Heart right ventricle (tissue), 16 donors: ENCODE measurements at regions of chr7 and their contacts with region 1.

Region 1: GRCh38 chr7:53811555-53812079 is 730.6 kb upstream of the VSTM2A start:
- DNase-seq: no peak
- ATAC-seq: no peak
- H3K4me3 ChIP-seq: no peak overlapping the region
- H3K27ac ChIP-seq: no peak overlapping the region
- H3K4me1 ChIP-seq: no peaks in the 10 kb centered on the region
- H3K27me3 ChIP-seq: no peaks in the 10 kb centered on the region
- CTCF ChIP-seq: no peak

Region 2: DNA sequence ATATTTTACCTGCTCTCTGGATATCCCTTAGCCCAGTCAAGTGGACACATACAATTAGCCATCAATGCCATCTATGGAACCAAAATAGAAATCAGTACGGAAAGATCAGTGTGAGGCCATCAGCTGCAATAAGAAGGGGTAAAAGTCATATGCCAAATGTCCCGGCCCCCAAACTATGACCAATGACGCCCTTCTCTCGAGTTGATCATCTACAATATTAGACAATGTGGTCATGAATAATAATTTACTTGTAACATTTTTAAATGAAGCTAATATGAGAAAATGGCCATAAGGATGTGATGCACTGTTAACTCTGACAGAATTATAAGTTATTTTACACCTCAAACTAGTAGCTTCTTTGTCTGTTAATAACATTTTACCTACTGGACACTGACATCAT is 187.2 kb before region 1 on chr7:
- intact Hi-C with region 1: no loop called
- DNase-seq: no peak
- ATAC-seq: no peak
- H3K4me3 ChIP-seq: no peak overlapping the region
- H3K27ac ChIP-seq: no peak overlapping the region
- H3K4me1 ChIP-seq: no peaks in the 10 kb centered on the region
- H3K27me3 ChIP-seq: no peaks in the 10 kb centered on the region
- CTCF ChIP-seq: no peak

Region 3: DNA sequence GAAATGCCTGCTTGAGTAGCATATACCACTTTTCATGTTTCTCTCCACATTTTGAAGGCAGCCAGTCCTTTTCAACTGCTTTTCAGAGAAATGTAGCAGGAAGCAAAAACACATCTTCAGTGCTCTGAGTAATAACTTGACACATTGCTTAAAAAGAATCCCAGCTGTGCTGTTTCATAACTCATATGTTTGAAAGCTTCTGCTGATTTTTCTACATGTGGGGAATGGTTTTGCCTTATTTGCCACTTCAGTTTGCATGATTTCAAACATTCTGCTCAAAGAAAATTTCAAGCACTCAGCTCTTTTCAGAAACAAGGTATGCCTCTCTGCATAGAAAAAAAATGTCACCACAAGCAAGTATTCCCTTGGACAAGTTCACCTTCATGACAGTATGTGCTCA is 43.4 kb before region 1 on chr7:
- intact Hi-C with region 1: loop called in 1 of 10 experiments (anchors 5 kb)
- DNase-seq: no peak
- ATAC-seq: no peak
- H3K4me3 ChIP-seq: no peak overlapping the region
- H3K27ac ChIP-seq: no peak overlapping the region
- H3K4me1 ChIP-seq: no peaks in the 10 kb centered on the region
- H3K27me3 ChIP-seq: no peaks in the 10 kb centered on the region
- CTCF ChIP-seq: no peak